Lower leg skin (tissue), 4 donors: ENCODE measurements at regions of chr9 and their contacts with region 1.

Region 1: DNA sequence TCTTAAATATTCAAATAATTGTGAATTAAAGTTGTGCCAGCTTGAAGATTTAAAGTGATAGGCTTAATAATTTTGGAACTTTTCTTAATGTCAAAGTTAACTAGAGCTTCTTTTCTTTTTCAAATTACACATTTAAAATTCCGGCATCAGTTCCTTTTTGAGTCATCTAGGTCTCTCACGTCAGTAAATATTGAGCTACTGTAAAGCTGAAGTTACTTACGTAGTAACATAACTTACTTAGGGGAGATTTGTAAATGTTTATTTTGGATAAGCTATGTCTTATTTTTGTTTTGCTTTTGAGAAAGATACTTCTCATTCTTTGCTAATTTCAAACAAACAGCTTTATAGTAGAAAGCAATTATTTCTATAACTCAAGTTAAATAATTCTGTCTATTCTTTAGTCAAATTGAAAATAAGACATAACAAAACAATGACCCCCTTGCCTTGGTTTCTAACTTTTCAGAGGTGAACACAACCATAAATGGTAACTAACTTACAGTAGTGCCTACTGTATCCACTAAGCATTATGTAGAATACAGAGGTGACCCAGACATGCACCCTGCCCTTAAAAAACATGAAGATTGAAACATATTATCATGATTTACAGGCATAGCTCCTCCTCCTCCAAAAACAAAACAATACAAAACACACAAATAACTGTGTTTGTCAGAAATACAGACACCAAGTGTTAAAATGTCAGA is 29.8 kb downstream of the CD274 start:
- DNase-seq: no peak
- H3K4me3 ChIP-seq: no peak overlapping the region
- CTCF ChIP-seq: no peak
- POLR2A ChIP-seq: no peak

Region 2: DNA sequence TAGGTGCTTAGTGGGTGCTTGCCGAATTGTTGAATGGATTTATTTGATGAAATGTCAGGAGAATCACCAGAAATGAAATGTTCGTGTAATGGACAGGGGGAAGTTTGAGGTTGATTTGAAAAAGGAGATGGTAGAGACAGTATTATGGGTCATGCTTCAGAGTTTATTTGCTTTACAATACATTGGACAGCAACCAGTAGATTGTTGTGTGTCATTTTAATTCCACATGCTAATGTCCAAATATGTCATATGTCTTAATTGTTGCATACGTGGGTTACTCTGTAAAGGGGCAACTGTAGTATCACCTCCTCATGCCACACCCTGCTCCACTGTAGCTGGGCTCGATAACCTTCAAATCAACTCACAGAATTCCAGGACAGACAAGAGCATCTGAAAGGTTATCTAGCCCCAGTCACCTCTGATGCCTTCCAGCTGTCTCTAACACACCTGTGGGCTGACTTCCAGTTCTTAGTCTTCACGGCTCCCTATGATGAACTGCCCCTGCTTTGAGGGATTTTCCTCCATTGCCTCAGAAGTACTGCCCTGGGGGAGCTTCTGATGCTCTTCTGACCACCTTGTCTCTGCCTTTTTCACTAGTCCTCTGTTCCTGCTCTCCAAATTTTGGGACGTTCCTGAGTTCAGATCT is 31.9 kb after region 1 on chr9:
- intact Hi-C with region 1: loop called (anchors 2 kb)
- DNase-seq: no peak
- H3K4me3 ChIP-seq: no peak overlapping the region
- CTCF ChIP-seq: no peak
- POLR2A ChIP-seq: no peak